ENCODE measurements at regions of chr2 and their contacts with region 1.

Region 1: DNA sequence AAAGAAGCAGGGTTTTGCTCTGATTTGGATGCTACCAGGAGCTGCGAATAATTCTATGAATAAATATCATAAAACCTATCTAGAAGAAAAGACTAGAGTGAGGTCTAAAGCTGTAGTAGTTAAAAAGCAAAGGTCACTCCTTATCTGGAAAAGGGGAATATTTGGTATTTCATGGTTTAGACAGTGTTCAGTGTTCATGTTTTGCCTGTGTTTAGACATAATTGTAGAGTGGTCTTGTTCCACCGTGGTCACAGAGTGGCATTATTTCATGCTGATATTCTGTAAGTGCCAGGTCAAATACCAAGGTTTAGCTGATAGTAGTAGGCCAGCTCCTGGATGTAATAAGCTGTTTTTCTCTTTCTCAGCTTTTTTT is 10.8 kb downstream of the SPAST start:
- DNase-seq: no peak
- ATAC-seq: no peak
- H3K4me3 ChIP-seq: no peak overlapping the region
- H3K27ac ChIP-seq: no peak overlapping the region
- H3K4me1 ChIP-seq: peaks cover 0 to 7% (median 0%) of the 10 kb centered on the region in 9 donors
- H3K27me3 ChIP-seq: no peaks in the 10 kb centered on the region
- CTCF ChIP-seq: no peak

Region 2: GRCh38 chr2:32124660-32125059 is 50.5 kb after region 1 on chr2:
- intact Hi-C with region 1: loop called in 1 of 10 experiments (anchors 10 kb)
- DNase-seq: no peak
- ATAC-seq: no peak
- H3K4me3 ChIP-seq: no peak overlapping the region
- H3K27ac ChIP-seq: no peak overlapping the region
- H3K4me1 ChIP-seq: no peaks in the 10 kb centered on the region
- H3K27me3 ChIP-seq: no peaks in the 10 kb centered on the region
- CTCF ChIP-seq: no peak

Region 3: GRCh38 chr2:32135409-32135808 is 61.3 kb after region 1 on chr2:
- intact Hi-C with region 1: no loop called
- DNase-seq: no peak
- ATAC-seq: peak in 1 of 8 donors; percentile 78
- H3K4me3 ChIP-seq: no peak overlapping the region
- H3K27ac ChIP-seq: no peak overlapping the region
- H3K4me1 ChIP-seq: peaks cover 0 to 11% (median 0%) of the 10 kb centered on the region in 9 donors
- H3K27me3 ChIP-seq: no peaks in the 10 kb centered on the region
- CTCF ChIP-seq: peak in 6 of 9 donors; percentile 10 to 30 (median 25)